IMR-90 (cell line): ENCODE measurements at regions of chr6 and their contacts with region 1.

Region 1: DNA sequence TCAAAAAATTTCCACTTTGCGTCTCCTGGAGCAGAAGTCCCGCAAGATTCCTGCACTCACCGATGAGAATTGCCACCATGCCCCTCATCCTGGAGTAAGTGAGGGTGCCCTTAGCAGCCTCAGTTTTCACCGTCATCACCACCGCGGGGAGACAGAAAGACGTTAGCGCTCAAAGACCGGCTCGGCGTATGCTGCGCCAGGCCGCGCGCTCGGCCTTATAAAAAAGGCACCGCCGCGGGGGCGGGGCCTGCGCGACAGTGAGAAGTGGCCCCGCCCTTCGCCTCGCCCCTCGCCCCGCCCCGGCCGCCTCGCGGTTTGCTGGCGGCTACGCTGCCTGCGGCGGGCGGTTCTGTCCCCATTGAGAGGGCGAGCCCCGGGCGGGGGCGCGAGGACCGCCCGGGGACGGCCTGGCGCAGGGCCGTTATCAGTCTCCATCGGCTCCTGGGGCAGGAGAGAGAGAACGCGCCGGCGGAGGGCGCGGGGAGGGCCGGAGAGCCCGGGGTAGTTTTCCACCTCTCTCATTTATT is 122.3 kb upstream of the SLC2A12 start:
- DNase-seq: peak; percentile 86
- ATAC-seq: peak; percentile 83
- H3K4me3 ChIP-seq: peak overlapping the region; percentile 62
- H3K27ac ChIP-seq: peak overlapping the region; percentile 76
- H3K4me1 ChIP-seq: peaks cover 11% of the 10 kb centered on the region
- H3K27me3 ChIP-seq: no peaks in the 10 kb centered on the region
- CTCF ChIP-seq: no peak
- POLR2A ChIP-seq: peak; percentile 100
- RAD21 ChIP-seq: no peak

Region 2: GRCh38 chr6:134288538-134289203 is 113.9 kb after region 1 on chr6:
- CTCF ChIA-PET with region 1: interaction called, 3 read pairs
- POLR2A ChIA-PET with region 1: no interaction called
- dilution Hi-C with region 1: no loop called
- in situ Hi-C with region 1: no loop called
- intact Hi-C with region 1: loop called (anchors 2 kb)
- DNase-seq: peak; percentile 94
- ATAC-seq: peak; percentile 81
- H3K4me3 ChIP-seq: no peak overlapping the region
- H3K27ac ChIP-seq: peak overlapping the region; percentile 91
- H3K4me1 ChIP-seq: peaks cover 9% of the 10 kb centered on the region
- H3K27me3 ChIP-seq: no peaks in the 10 kb centered on the region
- CTCF ChIP-seq: no peak
- POLR2A ChIP-seq: no peak; the same call in 1 of the 2 replicates
- RAD21 ChIP-seq: no peak; the same call in 1 of the 2 replicates

Region 3: DNA sequence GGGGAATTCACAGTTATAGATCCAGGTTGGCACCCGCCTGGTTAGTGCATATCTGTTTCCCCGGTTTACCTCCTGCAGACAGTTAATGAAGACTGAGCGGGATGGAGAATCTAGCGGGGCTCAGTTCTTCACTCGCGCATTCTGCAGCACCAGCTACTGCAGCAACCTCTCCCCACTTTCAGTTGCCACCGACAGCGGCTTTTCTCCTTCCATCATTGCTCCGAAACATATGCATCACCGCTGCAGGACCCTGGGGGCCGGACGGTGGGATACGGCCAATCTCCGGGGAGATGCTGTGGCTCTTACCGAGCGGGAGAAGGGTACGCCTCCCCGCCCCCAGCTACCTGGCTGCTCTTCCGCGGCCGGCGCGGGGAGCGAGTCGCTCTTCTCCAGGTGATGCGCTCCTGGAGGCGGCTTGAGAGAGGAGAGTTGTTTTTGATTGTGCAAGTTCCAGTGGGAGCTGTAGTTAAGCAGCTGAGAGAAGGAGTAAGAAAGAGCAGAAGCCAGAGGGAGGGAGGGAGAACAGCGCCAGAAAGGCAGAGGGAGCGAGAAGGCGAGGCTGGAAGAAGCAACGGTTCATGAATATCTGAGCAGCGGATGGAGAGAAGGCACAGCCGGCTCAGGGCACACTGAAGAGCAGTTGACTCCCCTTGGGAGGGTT is 142.9 kb after region 1 on chr6 and contains the start of gene SGK1:
- CTCF ChIA-PET with region 1: no interaction called
- POLR2A ChIA-PET with region 1: no interaction called
- dilution Hi-C with region 1: no loop called
- in situ Hi-C with region 1: no loop called
- intact Hi-C with region 1: loop called (anchors 2 kb)
- DNase-seq: peak; percentile 49
- ATAC-seq: peak; percentile 89
- H3K4me3 ChIP-seq: peak within 1 kb of the TSS; percentile 72
- H3K27ac ChIP-seq: no peak within 1 kb of the TSS
- H3K4me1 ChIP-seq: no peaks in the 10 kb centered on the region
- H3K27me3 ChIP-seq: no peaks in the 10 kb centered on the region
- CTCF ChIP-seq: 0 out of 2 replicates have a peak, but pooled peaks have one; percentile 3
- POLR2A ChIP-seq: no peak
- RAD21 ChIP-seq: no peak
- total RNA-seq, gene SGK1: 121 and 211 TPM in 2 replicates

Region 4: DNA sequence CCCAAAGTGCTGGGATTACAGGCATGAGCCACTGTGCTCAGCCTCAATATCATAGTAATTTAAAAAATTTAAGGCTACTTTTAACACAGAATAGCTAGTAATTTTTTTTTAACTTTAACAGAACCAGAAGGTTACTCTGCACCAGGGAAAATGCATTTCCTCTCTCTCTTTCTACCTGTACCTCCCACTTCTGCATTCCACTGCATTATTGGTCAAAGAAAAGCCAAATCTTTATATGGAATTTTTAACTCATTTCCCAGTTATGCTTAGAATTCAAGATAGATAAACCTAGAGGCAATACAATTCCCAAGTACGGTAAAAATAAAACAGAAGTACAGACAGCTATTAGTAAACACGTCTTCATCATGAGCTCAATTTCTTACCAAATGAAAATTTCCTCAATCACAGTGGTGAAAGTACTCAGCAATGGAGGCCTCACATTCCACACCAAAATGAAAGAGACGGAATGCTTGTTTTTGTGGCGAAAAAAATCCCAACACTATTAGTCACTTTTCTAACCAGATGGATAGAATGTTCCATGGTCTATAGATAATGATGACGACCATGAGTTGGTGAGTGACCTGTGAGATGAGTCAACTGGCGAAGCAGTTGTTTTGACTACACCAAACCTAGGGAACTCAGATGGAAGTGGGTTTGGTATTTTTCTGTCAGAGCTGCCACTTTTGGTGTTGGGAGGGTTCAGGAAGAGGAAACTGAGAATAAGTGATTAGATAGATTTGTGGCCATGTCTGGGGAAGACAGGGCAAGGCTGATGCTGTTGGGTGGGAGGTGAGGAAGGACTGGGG is 247.9 kb after region 1 on chr6:
- CTCF ChIA-PET with region 1: interaction called, 3 read pairs
- POLR2A ChIA-PET with region 1: interaction called, 5 read pairs
- dilution Hi-C with region 1: no loop called
- in situ Hi-C with region 1: loop called (anchors 10 kb)
- intact Hi-C with region 1: loop called (anchors 1 kb)
- DNase-seq: peak; percentile 100
- ATAC-seq: peak; percentile 66
- H3K4me3 ChIP-seq: no peak overlapping the region
- H3K27ac ChIP-seq: peak overlapping the region; percentile 96
- H3K4me1 ChIP-seq: peaks cover 19% of the 10 kb centered on the region
- H3K27me3 ChIP-seq: no peaks in the 10 kb centered on the region
- CTCF ChIP-seq: no peak
- POLR2A ChIP-seq: peak; percentile 40; the same call in 1 of the 2 replicates
- RAD21 ChIP-seq: peak; percentile 24

Region 5: DNA sequence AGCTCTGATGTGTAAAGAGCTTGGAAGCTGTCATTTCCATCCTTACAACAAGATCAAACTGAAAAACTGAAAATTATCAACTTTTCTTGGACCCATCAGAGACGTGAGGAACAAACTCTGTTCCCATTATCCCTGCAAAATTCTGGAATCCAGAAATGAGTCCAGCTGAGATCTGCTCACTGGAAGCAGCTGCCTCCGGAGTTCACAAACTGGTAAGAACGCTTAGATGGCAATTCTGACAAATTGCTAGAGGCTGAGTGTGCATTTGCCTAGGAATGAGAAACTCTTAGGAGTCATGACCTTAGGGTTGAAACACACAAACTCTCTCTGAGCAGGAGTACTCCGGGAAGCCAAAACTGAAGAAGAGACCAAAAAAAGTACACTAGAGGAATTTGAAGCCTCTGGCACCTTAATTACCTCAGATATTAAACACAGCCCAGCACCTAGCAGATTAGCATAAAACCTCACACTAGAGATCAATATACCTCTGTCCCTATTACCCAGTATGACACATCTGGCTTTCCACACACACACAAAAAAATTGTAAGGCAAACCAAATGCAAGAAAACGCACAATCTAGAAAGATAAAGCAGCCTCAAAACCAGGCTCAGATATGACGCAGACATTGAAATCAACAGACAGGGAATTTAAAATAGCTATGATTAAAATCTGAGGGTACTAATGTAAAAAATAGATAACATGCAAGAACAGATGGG is 376.7 kb after region 1 on chr6:
- CTCF ChIA-PET with region 1: no interaction called
- POLR2A ChIA-PET with region 1: no interaction called
- dilution Hi-C with region 1: no loop called
- in situ Hi-C with region 1: no loop called
- intact Hi-C with region 1: loop called (anchors 2 kb)
- DNase-seq: peak; percentile 90
- ATAC-seq: peak; percentile 97
- H3K4me3 ChIP-seq: no peak overlapping the region; the same call in 1 of the 2 replicates
- H3K27ac ChIP-seq: peak overlapping the region; percentile 6; the same call in 1 of the 2 replicates
- H3K4me1 ChIP-seq: no peaks in the 10 kb centered on the region; the same call in 1 of the 2 replicates
- H3K27me3 ChIP-seq: no peaks in the 10 kb centered on the region
- CTCF ChIP-seq: no peak
- POLR2A ChIP-seq: no peak
- RAD21 ChIP-seq: no peak

Region 6: GRCh38 chr6:134707342-134708031 is 532.8 kb after region 1 on chr6:
- CTCF ChIA-PET with region 1: interaction called, 3 read pairs
- POLR2A ChIA-PET with region 1: no interaction called
- dilution Hi-C with region 1: no loop called
- in situ Hi-C with region 1: no loop called
- intact Hi-C with region 1: loop called (anchors 1 kb)
- DNase-seq: peak; percentile 66
- ATAC-seq: peak; percentile 51
- H3K4me3 ChIP-seq: no peak overlapping the region
- H3K27ac ChIP-seq: peak overlapping the region; percentile 58; the same call in 1 of the 2 replicates
- H3K4me1 ChIP-seq: peaks cover 12% of the 10 kb centered on the region
- H3K27me3 ChIP-seq: no peaks in the 10 kb centered on the region
- CTCF ChIP-seq: no peak
- POLR2A ChIP-seq: no peak
- RAD21 ChIP-seq: no peak

Region 7: GRCh38 chr6:134882426-134883038 is 707.8 kb after region 1 on chr6:
- CTCF ChIA-PET with region 1: no interaction called
- POLR2A ChIA-PET with region 1: no interaction called
- dilution Hi-C with region 1: no loop called
- in situ Hi-C with region 1: no loop called
- intact Hi-C with region 1: loop called (anchors 1 kb)
- DNase-seq: peak; percentile 79
- ATAC-seq: peak; percentile 89
- H3K4me3 ChIP-seq: no peak overlapping the region
- H3K27ac ChIP-seq: peak overlapping the region; percentile 44; the same call in 1 of the 2 replicates
- H3K4me1 ChIP-seq: peaks cover 6% of the 10 kb centered on the region
- H3K27me3 ChIP-seq: no peaks in the 10 kb centered on the region
- CTCF ChIP-seq: peak; percentile 91
- POLR2A ChIP-seq: no peak
- RAD21 ChIP-seq: peak; percentile 95